ENCODE measurements at regions of chr9 and their contacts with region 1.

Region 1: GRCh38 chr9:127838375-127839078 is 15.9 kb downstream of the ENG start:
- DNase-seq: peak; percentile 98

Region 2: DNA sequence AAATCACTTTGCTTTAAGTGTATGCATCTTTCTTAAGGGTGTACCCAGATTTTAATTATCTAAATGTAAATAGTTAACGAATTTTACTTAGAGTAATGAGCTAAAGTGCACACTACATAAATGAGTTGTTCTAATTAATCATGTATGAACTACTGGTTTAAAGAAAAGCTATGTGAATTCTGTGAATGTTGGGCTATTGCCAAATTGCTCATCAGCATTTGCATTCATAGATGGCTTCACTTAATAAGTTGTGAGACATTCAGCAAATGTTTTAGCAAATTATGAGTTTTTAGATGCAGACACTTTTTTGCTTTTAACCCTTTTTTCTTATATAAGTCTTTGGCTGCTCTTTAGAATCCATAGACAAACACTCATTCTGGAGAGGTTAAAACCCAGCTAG is 1915.7 kb before region 1 on chr9:
- intact Hi-C with region 1: no loop called
- DNase-seq: no peak

Region 3: DNA sequence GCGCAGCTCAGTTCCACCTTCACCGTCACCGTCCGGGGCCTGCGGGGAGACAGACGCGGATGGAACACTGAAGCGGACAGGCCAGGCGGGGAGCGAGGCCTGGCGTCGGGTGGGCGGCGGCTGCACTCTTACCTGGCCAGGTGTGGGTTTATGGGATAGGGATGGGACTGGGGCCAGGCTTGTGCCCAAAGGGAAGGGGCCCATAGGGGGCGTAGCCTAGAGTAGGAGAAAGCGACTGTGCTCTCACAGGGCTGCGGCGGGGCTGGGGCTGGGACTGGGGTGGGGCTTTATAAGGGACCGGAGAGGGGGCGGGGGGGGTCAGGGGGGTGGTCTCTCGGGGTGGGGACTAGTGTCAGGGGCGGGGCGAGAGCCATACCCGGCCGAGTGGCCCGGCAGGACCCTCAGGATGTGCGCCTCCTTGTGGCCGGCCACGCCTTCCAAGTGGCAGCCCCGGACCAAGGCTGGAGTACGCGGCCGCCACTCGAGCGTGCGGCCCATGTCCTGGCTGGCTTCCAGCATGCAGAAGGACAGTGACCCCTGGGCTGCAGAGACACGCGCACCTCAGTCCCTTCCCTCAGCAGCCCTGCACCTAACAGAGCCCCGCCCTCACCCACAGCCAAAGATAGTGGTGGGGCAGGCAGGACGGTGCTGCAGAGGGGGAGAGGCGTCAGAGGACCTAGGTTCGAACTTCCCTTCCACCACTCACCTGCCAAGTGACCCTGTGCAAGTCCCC is 13.0 kb before region 1 on chr9:
- intact Hi-C with region 1: loop called in 1 of 2 experiments (anchors 2 kb)
- DNase-seq: no peak

Region 4: GRCh38 chr9:127854184-127854806 is 15.8 kb after region 1 on chr9 and contains the start of gene ENG:
- intact Hi-C with region 1: loop called in 1 of 2 experiments (anchors 2 kb)
- DNase-seq: peak; percentile 96
- total RNA-seq, gene ENG: 189 to 217 TPM

Region 5: DNA sequence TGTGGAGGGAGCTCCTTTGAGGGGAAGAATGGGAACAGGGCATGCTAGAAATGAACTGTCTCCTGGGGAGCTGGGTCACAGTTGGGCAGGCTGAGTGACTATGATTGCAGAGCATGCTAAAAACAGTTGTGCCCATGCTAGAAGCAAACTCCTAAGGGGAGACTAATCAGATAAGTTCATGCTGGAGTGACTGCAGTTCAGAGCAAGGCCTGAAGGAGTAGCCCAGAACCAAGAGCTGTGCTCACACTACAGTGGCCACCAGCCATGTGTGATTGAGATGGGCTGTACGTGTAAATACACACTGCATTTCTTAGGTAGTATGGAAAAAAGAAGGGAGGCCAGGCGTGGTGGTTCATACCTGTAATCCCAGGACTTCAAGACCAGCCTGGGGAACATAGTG is 49.3 kb after region 1 on chr9:
- intact Hi-C with region 1: no loop called
- DNase-seq: no peak

Region 6: DNA sequence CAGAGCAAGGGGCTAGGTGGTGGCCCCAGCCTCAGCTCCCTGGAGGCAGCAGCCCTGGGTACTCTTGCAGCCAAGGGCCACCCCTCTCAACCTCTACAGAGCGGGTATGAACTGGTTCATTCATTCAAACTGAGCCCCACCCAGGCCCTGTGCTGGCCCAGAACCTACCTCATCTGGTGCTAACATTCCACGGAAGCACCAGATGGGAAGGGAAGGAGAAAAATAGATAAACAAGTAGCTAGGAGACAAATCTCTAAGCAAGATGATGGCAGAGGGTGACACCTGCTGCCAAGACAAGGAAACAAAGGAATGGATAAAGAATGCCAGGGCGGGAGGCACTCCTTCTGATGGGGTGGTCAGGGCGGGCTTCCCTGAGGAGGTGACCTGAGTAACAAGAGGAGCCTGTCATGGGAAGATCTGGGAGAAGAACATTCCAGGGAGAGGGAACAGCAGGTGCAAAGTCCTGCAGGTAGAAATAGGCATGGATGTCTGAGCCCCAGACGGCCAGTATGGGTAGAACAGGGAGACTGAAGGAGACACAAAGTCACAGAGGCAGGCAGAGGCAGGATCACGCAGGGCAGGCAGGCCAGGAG is 72.2 kb after region 1 on chr9:
- intact Hi-C with region 1: no loop called
- DNase-seq: no peak